ENCODE measurements at regions of chr6 and their contacts with region 1.

Region 1: GRCh38 chr6:144653885-144654505 is 368.9 kb downstream of the UTRN start:
- DNase-seq: peak in 2 of 9 experiments; percentile 23 to 58
- ATAC-seq: peak; percentile 62
- H3K4me3 ChIP-seq: no peak overlapping the region
- H3K4me3 Mint-ChIP-seq: peak overlapping the region; percentile 36
- H3K27ac ChIP-seq: peak overlapping the region in 1 of 2 experiments; percentile 26
- H3K27ac Mint-ChIP-seq: peak overlapping the region; percentile 69
- H3K4me1 ChIP-seq: peaks cover 16% of the 10 kb centered on the region
- H3K4me1 Mint-ChIP-seq: peaks cover 59% of the 10 kb centered on the region
- H3K27me3 ChIP-seq: no peaks in the 10 kb centered on the region
- H3K27me3 Mint-ChIP-seq: no peaks in the 10 kb centered on the region
- CTCF ChIP-seq: no peak

Region 2: GRCh38 chr6:144673807-144674206 is 19.8 kb after region 1 on chr6:
- CTCF ChIA-PET with region 1: no interaction called
- POLR2A ChIA-PET with region 1: interaction called, 3 read pairs
- intact Hi-C with region 1: loop called in 1 of 2 experiments (anchors 2 kb)
- DNase-seq: no peak
- ATAC-seq: no peak
- H3K4me3 ChIP-seq: no peak overlapping the region
- H3K4me3 Mint-ChIP-seq: no peak overlapping the region
- H3K27ac ChIP-seq: no peak overlapping the region
- H3K27ac Mint-ChIP-seq: no peak overlapping the region
- H3K4me1 ChIP-seq: no peaks in the 10 kb centered on the region
- H3K4me1 Mint-ChIP-seq: peaks cover 32% of the 10 kb centered on the region
- H3K27me3 ChIP-seq: no peaks in the 10 kb centered on the region
- H3K27me3 Mint-ChIP-seq: no peaks in the 10 kb centered on the region
- CTCF ChIP-seq: no peak

Measured in CD8-positive, alpha-beta T cell (primary cell).